ENCODE measurements at regions of chr7 and their contacts with region 1.

Region 1: GRCh38 chr7:128209229-128210035 is 31.6 kb upstream of the LEP start:
- DNase-seq: peak; percentile 80
- H3K4me3 Mint-ChIP-seq: no peak overlapping the region
- H3K27ac Mint-ChIP-seq: no peak overlapping the region
- H3K4me1 Mint-ChIP-seq: no peaks in the 10 kb centered on the region
- H3K27me3 Mint-ChIP-seq: peaks cover 5% of the 10 kb centered on the region

Region 2: DNA sequence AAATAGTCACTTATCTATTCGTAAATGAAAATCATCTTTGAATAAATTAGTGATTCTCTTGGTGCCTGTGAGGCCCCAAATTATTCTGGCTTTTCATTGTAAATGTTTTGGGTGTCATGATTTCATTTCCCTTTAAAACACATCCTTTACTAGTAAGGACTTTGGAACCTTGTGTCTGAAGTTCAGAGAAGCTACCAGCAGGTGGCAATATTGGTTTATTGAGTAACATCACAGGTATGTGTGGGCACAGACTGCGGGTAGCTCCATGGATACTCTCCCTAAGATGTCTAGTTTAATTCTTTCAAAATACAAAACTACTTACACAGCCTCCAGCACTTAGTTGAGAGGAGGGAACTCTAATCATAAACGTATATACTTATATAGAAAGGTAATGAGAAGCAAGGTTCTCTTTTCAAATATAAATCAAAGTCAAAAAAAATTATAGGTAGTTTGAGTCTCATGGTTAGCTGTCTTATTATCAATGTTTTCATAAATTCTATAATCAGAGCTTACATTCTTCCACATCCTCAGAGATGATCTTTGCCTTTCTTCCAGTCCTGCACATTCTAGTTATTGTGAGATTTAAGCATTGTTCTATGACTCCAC is 1406.3 kb before region 1 on chr7:
- CTCF ChIA-PET with region 1: no interaction called
- intact Hi-C with region 1: loop called (anchors 10 kb)
- DNase-seq: peak; percentile 51
- H3K4me3 Mint-ChIP-seq: no peak overlapping the region
- H3K27ac Mint-ChIP-seq: no peak overlapping the region
- H3K4me1 Mint-ChIP-seq: no peaks in the 10 kb centered on the region
- H3K27me3 Mint-ChIP-seq: peaks cover 3% of the 10 kb centered on the region

Region 3: DNA sequence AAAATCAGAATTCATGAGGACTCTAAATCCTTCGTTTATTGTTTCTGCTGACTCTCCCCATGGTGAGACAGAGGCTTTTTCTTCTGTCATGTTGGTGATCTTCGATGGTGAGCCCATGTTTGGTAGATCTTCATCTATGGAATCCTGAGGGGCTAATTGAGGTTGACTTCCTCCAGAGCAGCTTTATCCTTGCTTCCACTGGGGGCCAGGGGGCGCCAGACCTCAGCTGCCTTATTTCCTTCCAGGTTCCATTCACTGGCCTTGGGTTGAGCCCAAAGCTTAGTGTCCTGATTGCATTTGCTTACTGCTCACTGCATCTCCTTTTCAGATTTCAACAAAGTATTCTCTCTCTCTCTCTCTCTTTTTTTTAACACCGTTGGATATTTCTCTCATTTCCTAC is 704.7 kb before region 1 on chr7:
- CTCF ChIA-PET with region 1: no interaction called
- intact Hi-C with region 1: loop called (anchors 2 kb)
- DNase-seq: peak; percentile 42
- H3K4me3 Mint-ChIP-seq: no peak overlapping the region
- H3K27ac Mint-ChIP-seq: no peak overlapping the region
- H3K4me1 Mint-ChIP-seq: no peaks in the 10 kb centered on the region
- H3K27me3 Mint-ChIP-seq: peaks cover 4% of the 10 kb centered on the region

Region 4: GRCh38 chr7:127708788-127709187 is 500.6 kb before region 1 on chr7:
- CTCF ChIA-PET with region 1: interaction called, 86 read pairs
- intact Hi-C with region 1: loop called (anchors 1 kb)
- DNase-seq: peak; percentile 89
- H3K4me3 Mint-ChIP-seq: no peak overlapping the region
- H3K27ac Mint-ChIP-seq: no peak overlapping the region
- H3K4me1 Mint-ChIP-seq: peaks cover 9% of the 10 kb centered on the region
- H3K27me3 Mint-ChIP-seq: no peaks in the 10 kb centered on the region

Region 5: GRCh38 chr7:128129224-128129864 is 80.1 kb before region 1 on chr7:
- CTCF ChIA-PET with region 1: interaction called, 94 read pairs
- intact Hi-C with region 1: no loop called
- DNase-seq: no peak
- H3K4me3 Mint-ChIP-seq: no peak overlapping the region
- H3K27ac Mint-ChIP-seq: no peak overlapping the region
- H3K4me1 Mint-ChIP-seq: peaks cover 6% of the 10 kb centered on the region
- H3K27me3 Mint-ChIP-seq: peaks cover 8% of the 10 kb centered on the region

Region 6: DNA sequence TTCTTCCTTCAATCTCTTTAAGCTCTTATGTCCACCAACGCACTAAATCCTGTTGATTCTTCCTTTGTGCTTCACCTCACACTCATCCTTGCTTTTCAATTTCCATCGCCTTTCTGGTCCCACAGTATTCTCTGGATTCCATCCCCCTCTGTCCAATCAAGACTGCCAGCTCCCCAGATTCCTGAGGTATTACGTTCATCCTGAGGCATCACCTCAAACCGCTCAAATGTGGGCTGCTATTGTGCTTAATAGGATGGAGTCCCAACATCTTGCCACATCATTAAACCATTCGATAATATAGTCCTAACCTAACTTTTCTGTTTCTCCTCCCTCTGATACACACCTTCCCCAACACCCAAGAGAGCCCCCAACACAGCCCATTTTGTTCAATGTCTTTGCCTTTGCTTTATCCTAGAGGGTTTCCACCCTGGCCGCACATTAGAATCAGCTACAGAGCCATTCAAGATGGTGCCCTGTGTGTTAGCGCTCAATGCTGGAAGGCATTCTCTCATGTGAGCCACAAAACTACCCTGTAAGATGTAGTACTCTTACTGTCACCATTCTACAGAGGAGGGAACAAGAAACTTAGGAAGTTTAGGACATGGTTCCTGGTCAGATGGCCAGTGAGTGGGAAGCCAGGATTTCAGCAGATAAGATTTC is 47.8 kb before region 1 on chr7:
- CTCF ChIA-PET with region 1: interaction called, 12 read pairs
- intact Hi-C with region 1: no loop called
- DNase-seq: no peak
- H3K4me3 Mint-ChIP-seq: no peak overlapping the region
- H3K27ac Mint-ChIP-seq: no peak overlapping the region
- H3K4me1 Mint-ChIP-seq: peaks cover 4% of the 10 kb centered on the region
- H3K27me3 Mint-ChIP-seq: peaks cover 23% of the 10 kb centered on the region

Region 7: GRCh38 chr7:128197589-128197988 is 11.8 kb before region 1 on chr7:
- CTCF ChIA-PET with region 1: interaction called, 32 read pairs
- intact Hi-C with region 1: loop called (anchors 1 kb)
- DNase-seq: no peak
- H3K4me3 Mint-ChIP-seq: no peak overlapping the region
- H3K27ac Mint-ChIP-seq: no peak overlapping the region
- H3K4me1 Mint-ChIP-seq: peaks cover 21% of the 10 kb centered on the region
- H3K27me3 Mint-ChIP-seq: peaks cover 26% of the 10 kb centered on the region